ENCODE measurements at regions of chr10 and their contacts with region 1.

Region 1: GRCh38 chr10:12068449-12069269 is at the start of gene DHTKD1:
- DNase-seq: peak; percentile 100
- H3K4me3 Mint-ChIP-seq: peak within 1 kb of the TSS; percentile 78
- H3K27ac Mint-ChIP-seq: peak within 1 kb of the TSS; percentile 86
- H3K4me1 Mint-ChIP-seq: peaks cover 17% of the 10 kb centered on the region
- H3K27me3 Mint-ChIP-seq: no peaks in the 10 kb centered on the region
- total RNA-seq, gene DHTKD1: 17.2 and 21.6 TPM in 2 replicates

Region 2: GRCh38 chr10:12042797-12043651 is 25.6 kb before region 1 on chr10 and contains the start of gene UPF2:
- intact Hi-C with region 1: loop called (anchors 1 kb)
- DNase-seq: peak; percentile 98
- H3K4me3 Mint-ChIP-seq: peak within 1 kb of the TSS; percentile 95
- H3K27ac Mint-ChIP-seq: peak within 1 kb of the TSS; percentile 100
- H3K4me1 Mint-ChIP-seq: peaks cover 32% of the 10 kb centered on the region
- H3K27me3 Mint-ChIP-seq: peaks cover 4% of the 10 kb centered on the region
- total RNA-seq, gene UPF2: 38.9 and 41.4 TPM in 2 replicates

Region 3: GRCh38 chr10:12097791-12098190 is 29.1 kb after region 1 on chr10:
- intact Hi-C with region 1: no loop called
- DNase-seq: no peak
- H3K4me3 Mint-ChIP-seq: no peak overlapping the region
- H3K27ac Mint-ChIP-seq: no peak overlapping the region
- H3K4me1 Mint-ChIP-seq: no peaks in the 10 kb centered on the region
- H3K27me3 Mint-ChIP-seq: no peaks in the 10 kb centered on the region

Region 4: GRCh38 chr10:12113627-12114026 is 45.0 kb after region 1 on chr10:
- intact Hi-C with region 1: loop called (anchors 1 kb)
- DNase-seq: no peak
- H3K4me3 Mint-ChIP-seq: peak overlapping the region; percentile 63
- H3K27ac Mint-ChIP-seq: no peak overlapping the region
- H3K4me1 Mint-ChIP-seq: peaks cover 25% of the 10 kb centered on the region
- H3K27me3 Mint-ChIP-seq: no peaks in the 10 kb centered on the region

Region 5: DNA sequence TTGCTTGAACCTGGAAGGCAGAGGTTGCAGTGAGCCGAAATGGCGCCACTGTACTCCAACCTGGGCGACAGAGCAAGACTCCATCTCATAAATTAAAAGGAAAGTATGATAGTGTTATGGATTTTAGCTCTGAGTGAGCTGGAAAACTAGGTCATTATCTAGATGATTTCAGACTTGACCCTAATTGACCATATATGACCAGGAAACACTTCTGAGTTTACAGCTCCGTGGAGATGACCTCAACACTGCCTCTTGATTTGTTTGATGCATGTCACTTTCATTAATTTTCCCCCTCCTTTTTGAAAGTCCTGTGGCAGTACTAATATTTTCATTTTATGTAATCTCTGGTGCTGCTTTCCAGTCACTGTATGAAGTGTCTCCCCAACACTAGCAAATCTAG is 53.0 kb after region 1 on chr10:
- intact Hi-C with region 1: loop called (anchors 2 kb)
- DNase-seq: no peak
- H3K4me3 Mint-ChIP-seq: peak overlapping the region; percentile 79
- H3K27ac Mint-ChIP-seq: peak overlapping the region; percentile 97
- H3K4me1 Mint-ChIP-seq: peaks cover 27% of the 10 kb centered on the region
- H3K27me3 Mint-ChIP-seq: no peaks in the 10 kb centered on the region

Region 6: DNA sequence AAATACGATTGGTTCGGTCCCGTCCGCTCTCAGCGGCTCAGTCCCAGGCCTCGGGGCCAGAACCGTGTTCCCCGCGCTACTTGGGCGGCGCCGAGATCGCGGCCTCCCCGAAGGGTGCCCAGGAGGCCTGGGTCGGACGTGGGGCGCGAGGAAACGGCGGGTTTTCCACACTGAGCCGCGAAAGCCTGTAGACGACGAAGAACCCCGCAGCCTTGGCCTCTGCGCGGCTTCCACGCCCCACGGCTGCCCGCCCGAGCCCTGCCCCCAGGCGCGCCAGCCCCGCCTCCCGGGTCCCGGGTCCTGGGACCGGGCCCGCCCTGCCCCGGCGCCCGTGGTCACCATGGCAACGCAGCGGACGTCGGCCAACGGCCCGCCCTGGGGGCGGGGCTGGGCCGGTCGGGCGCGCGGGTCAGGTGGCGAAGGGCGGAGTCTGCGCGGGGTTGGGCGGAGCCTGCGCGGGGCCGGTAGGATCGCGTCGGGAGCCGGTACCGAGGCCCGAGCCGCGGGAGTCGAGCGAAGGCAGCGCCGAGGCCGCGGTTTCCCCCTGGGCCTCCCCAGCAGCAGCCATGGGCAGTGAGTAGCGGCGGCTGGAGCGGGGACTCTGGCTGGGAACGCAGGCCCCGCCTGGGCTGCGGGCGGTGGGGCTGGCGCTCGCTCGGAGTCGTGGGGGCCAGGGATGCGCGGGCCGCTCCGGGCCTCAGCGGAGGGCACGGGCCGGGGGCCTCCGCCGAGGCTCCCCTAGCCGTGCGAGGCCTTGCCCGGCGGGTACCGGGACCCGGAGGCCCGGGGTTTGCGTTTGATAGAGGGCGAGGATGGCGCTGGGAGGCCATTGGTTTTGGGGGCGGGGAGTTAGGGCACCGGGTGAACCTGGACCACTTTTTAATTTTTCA is 60.8 kb after region 1 on chr10 and contains the start of gene SEC61A2:
- intact Hi-C with region 1: loop called (anchors 1 kb)
- DNase-seq: peak; percentile 100
- H3K4me3 Mint-ChIP-seq: peak within 1 kb of the TSS; percentile 85
- H3K27ac Mint-ChIP-seq: peak within 1 kb of the TSS; percentile 90
- H3K4me1 Mint-ChIP-seq: peaks cover 30% of the 10 kb centered on the region
- H3K27me3 Mint-ChIP-seq: no peaks in the 10 kb centered on the region
- total RNA-seq, gene SEC61A2: 13.3 and 21.2 TPM in 2 replicates

Region 7: DNA sequence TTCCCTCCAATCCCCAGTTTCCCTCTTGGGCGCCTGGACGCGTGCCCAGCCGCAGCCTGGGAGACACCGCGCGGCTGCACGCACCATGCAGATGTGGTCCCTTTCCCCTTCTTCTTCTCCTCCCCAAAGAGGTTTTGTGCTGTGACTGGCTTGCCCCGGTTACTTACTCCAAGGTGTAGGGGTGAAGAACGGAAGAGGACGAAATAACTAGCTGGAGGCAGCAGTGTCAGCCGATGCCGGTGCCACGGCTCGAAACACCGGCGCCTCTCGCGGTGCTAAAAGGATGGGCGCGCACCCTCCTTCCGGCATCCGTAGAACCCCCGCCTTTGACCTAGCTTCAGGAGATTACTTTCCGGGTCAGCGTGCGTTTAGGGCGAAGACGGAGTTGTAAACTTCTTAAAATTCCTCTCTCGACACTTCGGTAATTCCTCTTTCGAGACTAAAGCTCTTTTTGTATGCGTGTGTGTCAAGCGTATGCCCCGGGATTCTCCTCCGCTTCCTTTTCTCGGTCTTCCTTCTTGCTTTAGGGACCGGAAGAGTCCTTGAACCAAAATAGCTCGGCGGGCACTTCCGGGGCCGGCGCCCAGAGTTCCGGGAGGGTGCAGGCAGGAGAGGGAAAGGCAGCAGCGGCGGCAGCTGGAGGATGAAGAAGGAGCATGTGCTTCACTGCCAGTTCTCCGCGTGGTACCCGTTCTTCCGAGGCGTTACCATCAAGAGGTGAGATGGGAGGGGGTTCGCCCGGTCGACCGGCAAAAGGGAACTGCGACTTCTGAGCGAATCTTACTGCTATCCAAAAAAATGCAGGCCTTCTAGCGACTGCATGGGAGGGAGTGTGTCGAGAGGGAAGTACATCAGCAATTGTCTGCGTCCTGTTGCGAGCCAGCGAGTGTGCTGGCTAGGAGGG is 127.2 kb after region 1 on chr10 and contains the starts of genes CDC123 and NUDT5:
- intact Hi-C with region 1: loop called (anchors 1 kb)
- DNase-seq: peak; percentile 96
- H3K4me3 Mint-ChIP-seq: peak within 1 kb of the TSS; percentile 98
- H3K27ac Mint-ChIP-seq: peak within 1 kb of the TSS; percentile 99
- H3K4me1 Mint-ChIP-seq: peaks cover 40% of the 10 kb centered on the region
- H3K27me3 Mint-ChIP-seq: no peaks in the 10 kb centered on the region
- total RNA-seq, gene CDC123: 184 and 185 TPM in 2 replicates
- total RNA-seq, gene NUDT5: 123 and 128 TPM in 2 replicates

Region 8: GRCh38 chr10:12214763-12215218 is 146.1 kb after region 1 on chr10:
- intact Hi-C with region 1: no loop called
- DNase-seq: peak; percentile 82
- H3K4me3 Mint-ChIP-seq: peak overlapping the region; percentile 68
- H3K27ac Mint-ChIP-seq: peak overlapping the region; percentile 80
- H3K4me1 Mint-ChIP-seq: peaks cover 14% of the 10 kb centered on the region
- H3K27me3 Mint-ChIP-seq: no peaks in the 10 kb centered on the region

Region 9: GRCh38 chr10:13302814-13303555 is 1234.3 kb after region 1 on chr10:
- intact Hi-C with region 1: loop called (anchors 2 kb)
- DNase-seq: no peak
- H3K4me3 Mint-ChIP-seq: peak overlapping the region; percentile 82
- H3K27ac Mint-ChIP-seq: peak overlapping the region; percentile 98
- H3K4me1 Mint-ChIP-seq: peaks cover 22% of the 10 kb centered on the region
- H3K27me3 Mint-ChIP-seq: no peaks in the 10 kb centered on the region